Activated naive CD8-positive, alpha-beta T cell treated with anti-CD3 and anti-CD28 coated beads, Interleukin-2, amount 10 ng/mL, durations not matched to agents 7 days and 5 days (primary cell): ENCODE measurements at regions of chr10 and their contacts with region 1.

Region 1: GRCh38 chr10:100508691-100509150 is 10.9 kb downstream of the SEC31B start:
- DNase-seq: peak; percentile 48
- ATAC-seq: peak; percentile 51
- H3K4me3 Mint-ChIP-seq: peak overlapping the region; percentile 87
- H3K27ac Mint-ChIP-seq: peak overlapping the region; percentile 97
- H3K4me1 Mint-ChIP-seq: peaks cover 88% of the 10 kb centered on the region
- H3K27me3 Mint-ChIP-seq: no peaks in the 10 kb centered on the region

Region 2: DNA sequence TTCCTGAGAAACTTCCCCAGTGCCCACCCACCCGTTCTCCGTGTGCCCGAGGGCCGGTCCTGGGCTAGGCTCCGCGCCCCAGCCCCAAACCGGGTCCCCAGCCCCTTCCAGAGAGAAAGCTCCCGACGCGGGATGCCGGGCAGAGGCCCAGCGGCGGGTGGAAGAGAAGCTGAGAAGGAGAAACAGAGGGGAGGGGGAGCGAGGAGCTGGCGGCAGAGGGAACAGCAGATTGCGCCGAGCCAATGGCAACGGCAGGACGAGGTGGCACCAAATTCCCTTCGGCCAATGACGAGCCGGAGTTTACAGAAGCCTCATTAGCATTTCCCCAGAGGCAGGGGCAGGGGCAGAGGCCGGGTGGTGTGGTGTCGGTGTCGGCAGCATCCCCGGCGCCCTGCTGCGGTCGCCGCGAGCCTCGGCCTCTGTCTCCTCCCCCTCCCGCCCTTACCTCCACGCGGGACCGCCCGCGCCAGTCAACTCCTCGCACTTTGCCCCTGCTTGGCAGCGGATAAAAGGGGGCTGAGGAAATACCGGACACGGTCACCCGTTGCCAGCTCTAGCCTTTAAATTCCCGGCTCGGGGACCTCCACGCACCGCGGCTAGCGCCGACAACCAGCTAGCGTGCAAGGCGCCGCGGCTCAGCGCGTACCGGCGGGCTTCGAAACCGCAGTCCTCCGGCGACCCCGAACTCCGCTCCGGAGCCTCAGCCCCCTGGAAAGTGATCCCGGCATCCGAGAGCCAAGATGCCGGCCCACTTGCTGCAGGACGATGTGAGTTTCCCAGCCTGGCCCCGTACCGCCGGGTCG is 161.8 kb before region 1 on chr10 and contains the start of gene SCD:
- POLR2A ChIA-PET with region 1: interaction called, 48 read pairs
- DNase-seq: peak; percentile 81
- ATAC-seq: peak; percentile 91
- H3K4me3 Mint-ChIP-seq: peak within 1 kb of the TSS; percentile 100
- H3K27ac Mint-ChIP-seq: peak within 1 kb of the TSS; percentile 75
- H3K4me1 Mint-ChIP-seq: peaks cover 41% of the 10 kb centered on the region
- H3K27me3 Mint-ChIP-seq: no peaks in the 10 kb centered on the region
- total RNA-seq, gene SCD: 212 to 220 TPM

Region 3: DNA sequence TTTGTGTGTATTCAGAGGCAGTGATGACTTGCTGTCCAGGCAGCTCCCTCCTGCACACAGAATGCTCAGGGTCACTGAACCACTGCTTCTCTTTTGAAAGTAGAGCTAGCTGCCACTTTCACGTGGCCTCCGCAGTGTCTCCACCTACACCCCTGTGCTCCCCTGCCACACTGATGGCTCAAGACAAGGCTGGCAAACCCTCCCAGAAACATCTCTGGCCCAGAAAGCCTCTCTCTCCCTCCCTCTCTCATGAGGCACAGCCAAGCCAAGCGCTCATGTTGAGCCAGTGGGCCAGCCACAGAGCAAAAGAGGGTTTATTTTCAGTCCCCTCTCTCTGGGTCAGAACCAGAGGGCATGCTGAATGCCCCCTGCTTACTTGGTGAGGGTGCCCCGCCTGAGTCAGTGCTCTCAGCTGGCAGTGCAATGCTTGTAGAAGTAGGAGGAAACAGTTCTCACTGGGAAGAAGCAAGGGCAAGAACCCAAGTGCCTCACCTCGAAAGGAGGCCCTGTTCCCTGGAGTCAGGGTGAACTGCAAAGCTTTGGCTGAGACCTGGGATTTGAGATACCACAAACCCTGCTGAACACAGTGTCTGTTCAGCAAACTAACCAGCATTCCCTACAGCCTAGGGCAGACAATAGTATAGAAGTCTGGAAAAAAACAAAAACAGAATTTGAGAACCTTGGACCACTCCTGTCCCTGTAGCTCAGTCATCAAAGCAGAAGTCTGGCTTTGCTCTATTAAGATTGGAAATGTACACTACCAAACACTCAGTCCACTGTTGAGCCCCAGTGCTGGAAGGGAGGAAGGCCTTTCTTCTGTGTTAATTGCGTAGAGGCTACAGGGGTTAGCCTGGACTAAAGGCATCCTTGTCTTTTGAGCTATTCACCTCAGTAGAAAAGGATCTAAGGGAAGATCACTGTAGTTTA is 145.9 kb before region 1 on chr10:
- POLR2A ChIA-PET with region 1: no interaction called
- DNase-seq: no peak
- ATAC-seq: no peak
- H3K4me3 Mint-ChIP-seq: no peak overlapping the region
- H3K27ac Mint-ChIP-seq: peak overlapping the region; percentile 52
- H3K4me1 Mint-ChIP-seq: peaks cover 45% of the 10 kb centered on the region
- H3K27me3 Mint-ChIP-seq: no peaks in the 10 kb centered on the region

Region 4: DNA sequence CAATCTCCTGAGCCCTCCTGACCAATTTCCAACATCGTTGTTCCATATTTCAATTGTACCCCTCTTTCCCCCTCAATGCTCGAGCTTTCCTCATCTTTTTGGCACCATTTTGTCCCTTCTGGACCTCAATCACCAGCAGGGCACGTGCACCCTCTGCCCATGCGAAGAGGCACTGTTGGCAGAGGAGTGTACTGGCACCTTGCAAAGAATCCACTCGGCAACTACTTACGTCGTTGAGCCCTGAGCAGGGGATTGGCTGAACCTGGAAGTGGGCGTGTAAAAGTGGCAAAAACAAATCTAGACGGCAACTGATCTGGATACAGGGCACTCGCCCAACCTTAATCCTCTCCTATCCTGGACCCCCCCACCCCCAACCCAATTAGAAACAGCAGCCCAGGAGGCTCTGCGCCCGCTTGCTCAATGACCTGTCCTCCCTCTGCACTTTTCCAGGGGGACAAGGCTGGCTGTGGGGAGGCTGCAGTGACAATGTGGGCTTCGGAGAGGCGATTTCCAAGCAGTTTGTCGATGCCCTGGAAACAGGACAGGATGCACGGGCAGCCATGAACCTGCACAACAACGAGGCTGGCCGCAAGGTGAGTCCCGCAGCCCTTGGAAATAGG is 27.1 kb before region 1 on chr10:
- POLR2A ChIA-PET with region 1: interaction called, 99 read pairs
- DNase-seq: peak; percentile 91
- ATAC-seq: peak; percentile 84
- H3K4me3 Mint-ChIP-seq: peak overlapping the region; percentile 80
- H3K27ac Mint-ChIP-seq: peak overlapping the region; percentile 69
- H3K4me1 Mint-ChIP-seq: peaks cover 29% of the 10 kb centered on the region
- H3K27me3 Mint-ChIP-seq: peaks cover 12% of the 10 kb centered on the region

Region 5: GRCh38 chr10:100518761-100519241 is 10.1 kb after region 1 on chr10:
- POLR2A ChIA-PET with region 1: interaction called, 25 read pairs
- DNase-seq: peak; percentile 54
- ATAC-seq: peak; percentile 69
- H3K4me3 Mint-ChIP-seq: peak overlapping the region; percentile 39
- H3K27ac Mint-ChIP-seq: peak overlapping the region; percentile 50
- H3K4me1 Mint-ChIP-seq: peaks cover 35% of the 10 kb centered on the region
- H3K27me3 Mint-ChIP-seq: no peaks in the 10 kb centered on the region

Region 6: DNA sequence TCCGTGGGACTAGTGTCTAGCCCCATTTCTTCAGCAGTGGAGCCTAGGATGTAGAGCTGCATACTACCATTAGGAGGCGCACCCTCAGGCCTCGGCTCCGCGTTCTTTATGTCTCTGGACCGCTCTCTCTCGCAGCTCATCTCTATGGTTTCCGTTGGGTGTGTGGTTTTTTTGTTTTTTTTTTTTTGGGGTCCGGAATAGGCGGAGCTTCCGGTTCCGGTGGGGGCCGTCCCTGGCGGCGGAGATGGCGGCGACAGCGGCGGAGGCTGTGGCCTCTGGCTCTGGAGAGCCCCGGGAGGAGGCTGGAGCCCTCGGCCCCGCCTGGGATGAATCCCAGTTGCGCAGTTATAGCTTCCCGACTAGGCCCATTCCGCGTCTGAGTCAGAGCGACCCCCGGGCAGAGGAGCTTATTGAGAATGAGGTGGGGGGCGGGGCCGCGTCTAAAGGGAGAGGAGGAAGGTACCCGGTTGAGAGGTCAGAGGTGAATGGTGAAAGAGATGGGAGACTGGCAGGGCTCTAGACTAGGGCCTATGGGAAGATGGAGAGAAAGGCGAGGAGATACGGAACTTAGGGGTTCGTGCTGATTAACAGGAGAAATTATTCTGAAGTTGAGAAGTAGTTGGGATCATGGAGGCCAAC is 27.1 kb after region 1 on chr10 and contains the start of gene HIF1AN:
- POLR2A ChIA-PET with region 1: interaction called, 16 read pairs
- DNase-seq: peak; percentile 88
- ATAC-seq: peak; percentile 98
- H3K4me3 Mint-ChIP-seq: no peak within 1 kb of the TSS
- H3K27ac Mint-ChIP-seq: peak within 1 kb of the TSS; percentile 26
- H3K4me1 Mint-ChIP-seq: peaks cover 35% of the 10 kb centered on the region
- H3K27me3 Mint-ChIP-seq: no peaks in the 10 kb centered on the region
- total RNA-seq, gene HIF1AN: 52.3 to 56.4 TPM

Region 7: GRCh38 chr10:100569618-100570473 is 61.1 kb after region 1 on chr10:
- POLR2A ChIA-PET with region 1: no interaction called
- DNase-seq: no peak
- ATAC-seq: peak; percentile 33
- H3K4me3 Mint-ChIP-seq: no peak overlapping the region
- H3K27ac Mint-ChIP-seq: no peak overlapping the region
- H3K4me1 Mint-ChIP-seq: no peaks in the 10 kb centered on the region
- H3K27me3 Mint-ChIP-seq: peaks cover 43% of the 10 kb centered on the region